A673 (cell line): ENCODE measurements at regions of chr1 and their contacts with region 1.

Region 1: DNA sequence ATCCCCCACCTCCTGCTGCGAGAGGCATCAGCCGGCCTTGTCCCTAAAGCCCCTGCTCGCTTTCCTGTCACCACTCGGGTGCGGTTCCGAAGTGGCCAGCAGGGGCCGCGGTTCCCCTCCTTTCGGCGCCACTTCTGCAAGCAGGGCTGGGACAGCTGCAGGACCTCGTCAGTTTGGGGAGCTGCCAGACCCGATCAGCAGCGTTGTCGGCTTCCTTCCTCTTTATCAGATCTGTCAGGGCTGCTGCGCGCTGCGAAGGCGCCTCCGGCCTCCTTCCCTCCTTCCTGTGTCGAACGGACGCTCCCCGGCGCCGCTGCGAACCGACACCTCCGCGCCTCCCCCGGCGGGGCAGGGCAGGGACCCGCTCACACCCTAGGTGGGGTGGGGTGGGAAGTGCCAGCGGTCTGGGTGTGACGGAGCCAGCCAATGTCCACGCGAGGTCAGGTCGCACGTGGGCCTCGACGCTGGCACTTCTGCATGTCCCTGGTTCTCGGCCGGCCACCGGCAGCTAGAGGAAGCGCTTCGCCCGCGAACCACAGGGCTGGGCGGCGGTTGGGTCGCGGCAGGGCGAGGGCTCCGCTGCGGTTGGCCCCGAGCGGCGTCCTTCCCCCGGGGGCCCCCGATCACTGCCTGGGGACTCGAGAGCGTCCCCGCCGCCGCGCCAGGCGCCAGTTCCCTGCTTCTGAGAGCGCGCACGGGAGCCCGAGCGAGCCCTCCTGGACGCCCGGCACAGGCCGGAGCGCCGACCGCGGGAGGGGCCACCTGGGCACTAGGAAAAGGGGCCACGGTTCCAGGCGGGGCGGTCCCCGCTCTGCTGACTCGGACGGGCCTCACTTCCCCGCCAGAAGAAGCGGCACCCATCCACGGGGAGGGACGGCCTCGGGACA is 81.8 kb downstream of the RUNX3 start:
- DNase-seq: peak; percentile 95
- H3K4me3 ChIP-seq: peak overlapping the region; percentile 60
- H3K27ac ChIP-seq: peak overlapping the region; percentile 65
- H3K4me1 ChIP-seq: peaks cover 12% of the 10 kb centered on the region
- H3K27me3 ChIP-seq: no peaks in the 10 kb centered on the region
- CTCF ChIP-seq: peak; percentile 94

Region 2: DNA sequence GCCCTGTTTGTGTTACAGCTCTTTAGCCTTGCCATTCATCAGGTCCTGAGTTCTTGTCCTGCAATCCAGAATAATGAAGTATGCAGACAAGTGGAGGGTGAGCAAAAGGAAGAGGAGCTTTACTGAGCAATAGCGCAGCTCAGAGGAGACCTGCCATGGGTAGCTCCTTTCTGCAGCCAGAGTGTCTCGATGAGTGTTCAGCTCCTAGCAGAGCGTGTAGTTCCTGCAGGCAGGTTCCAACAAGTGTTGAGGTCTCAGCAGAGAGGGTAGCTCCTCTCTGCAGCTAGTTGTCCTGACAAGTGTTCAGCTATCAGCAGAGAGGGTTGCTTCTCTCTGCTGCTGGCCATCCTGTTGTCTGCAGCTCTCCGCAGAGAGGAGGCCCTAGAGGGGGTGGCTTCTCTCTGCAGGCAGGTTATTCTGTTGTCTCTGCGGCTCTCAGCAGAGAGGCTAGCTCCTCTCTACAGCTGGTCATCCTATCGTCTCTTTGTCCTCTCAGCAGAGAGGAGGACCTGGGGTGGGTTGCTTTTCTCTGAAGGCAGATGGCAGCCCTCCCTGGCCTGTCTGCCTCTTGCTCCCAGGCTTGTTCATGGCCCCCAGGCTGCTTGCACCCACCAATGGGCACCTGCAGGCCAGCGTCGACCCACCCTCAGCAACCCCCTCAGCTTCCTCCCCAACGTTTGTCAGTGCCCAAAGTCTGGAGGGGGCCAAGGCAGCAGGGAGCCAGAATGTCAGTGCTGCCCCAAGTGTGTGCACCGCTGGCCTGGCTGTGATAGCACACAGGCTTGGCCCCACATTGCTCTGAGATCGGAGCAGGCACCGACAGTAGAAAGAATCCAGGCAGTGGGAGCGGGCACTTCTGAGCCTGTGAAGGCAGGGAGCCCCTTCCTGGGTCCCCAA is 194.3 kb after region 1 on chr1:
- CTCF ChIA-PET with region 1: no interaction called
- POLR2A ChIA-PET with region 1: no interaction called
- intact Hi-C with region 1: loop called (anchors 5 kb)
- DNase-seq: no peak
- H3K4me3 ChIP-seq: no peak overlapping the region
- H3K27ac ChIP-seq: no peak overlapping the region
- H3K4me1 ChIP-seq: no peaks in the 10 kb centered on the region
- H3K27me3 ChIP-seq: no peaks in the 10 kb centered on the region
- CTCF ChIP-seq: no peak

Region 3: GRCh38 chr1:25100151-25100833 is 252.1 kb after region 1 on chr1:
- CTCF ChIA-PET with region 1: interaction called, 3 read pairs
- POLR2A ChIA-PET with region 1: no interaction called
- intact Hi-C with region 1: loop called (anchors 2 kb)
- DNase-seq: no peak
- H3K4me3 ChIP-seq: no peak overlapping the region
- H3K27ac ChIP-seq: no peak overlapping the region
- H3K4me1 ChIP-seq: no peaks in the 10 kb centered on the region
- H3K27me3 ChIP-seq: no peaks in the 10 kb centered on the region
- CTCF ChIP-seq: no peak

Region 4: DNA sequence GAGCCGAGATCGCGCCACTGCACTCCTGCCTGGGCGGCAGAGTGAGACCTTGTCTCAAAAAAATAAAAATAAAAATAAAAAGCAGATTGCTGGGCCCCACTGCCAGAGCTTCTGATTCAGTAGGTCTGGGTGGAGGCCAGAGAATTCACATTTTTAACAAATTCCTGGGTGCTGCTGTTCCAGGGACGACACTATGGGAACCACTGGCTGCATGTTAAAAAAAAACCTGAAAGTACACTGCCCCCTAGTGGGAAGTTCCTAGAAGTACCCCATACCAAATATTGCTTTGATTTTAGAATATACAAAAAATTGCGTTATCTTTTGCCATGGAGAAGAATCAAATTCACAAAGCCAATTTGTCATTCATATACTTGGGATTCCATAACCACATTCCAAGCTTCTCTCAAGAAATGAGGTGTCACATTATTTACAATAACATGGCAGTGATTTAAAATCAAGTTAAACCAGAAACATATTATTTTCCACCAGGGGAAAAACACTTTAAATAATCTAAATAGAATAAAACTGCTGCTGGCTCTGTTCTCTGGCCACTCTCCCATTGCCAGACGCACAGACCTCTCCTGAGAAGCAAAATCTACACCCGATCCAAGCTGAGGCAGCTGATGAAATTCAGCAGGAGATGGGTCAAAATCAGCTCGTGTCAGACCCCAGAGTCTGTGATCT is 356.7 kb after region 1 on chr1:
- CTCF ChIA-PET with region 1: interaction called, 5 read pairs
- POLR2A ChIA-PET with region 1: no interaction called
- intact Hi-C with region 1: loop called (anchors 5 kb)
- DNase-seq: peak; percentile 73
- H3K4me3 ChIP-seq: no peak overlapping the region
- H3K27ac ChIP-seq: no peak overlapping the region
- H3K4me1 ChIP-seq: no peaks in the 10 kb centered on the region
- H3K27me3 ChIP-seq: no peaks in the 10 kb centered on the region
- CTCF ChIP-seq: peak; percentile 73